AG04449 (cell line): ENCODE measurements at regions of chr2 and their contacts with region 1.

Region 1: DNA sequence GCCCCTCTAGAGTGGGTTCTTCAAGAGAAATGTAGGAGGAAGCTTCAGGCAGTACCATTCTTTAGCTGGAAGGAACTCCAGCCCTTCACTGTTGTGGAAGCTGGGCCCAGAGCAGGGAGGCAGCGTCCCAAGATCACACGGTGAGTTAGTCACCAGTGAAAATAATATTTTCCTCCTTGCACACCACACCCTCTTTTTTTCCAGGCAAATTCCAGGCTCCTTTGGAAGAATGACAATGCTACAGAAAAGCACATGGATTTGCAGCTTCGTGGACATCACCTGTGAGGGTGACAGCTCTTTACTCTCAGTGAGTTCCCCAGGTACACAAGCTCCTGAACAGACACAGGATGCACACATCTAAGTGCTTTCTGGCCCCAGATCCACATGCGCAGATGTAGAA is 157.1 kb downstream of the COL6A3 start:
- DNase-seq: no peak
- H3K4me3 ChIP-seq: no peak overlapping the region
- CTCF ChIP-seq: no peak

Region 2: DNA sequence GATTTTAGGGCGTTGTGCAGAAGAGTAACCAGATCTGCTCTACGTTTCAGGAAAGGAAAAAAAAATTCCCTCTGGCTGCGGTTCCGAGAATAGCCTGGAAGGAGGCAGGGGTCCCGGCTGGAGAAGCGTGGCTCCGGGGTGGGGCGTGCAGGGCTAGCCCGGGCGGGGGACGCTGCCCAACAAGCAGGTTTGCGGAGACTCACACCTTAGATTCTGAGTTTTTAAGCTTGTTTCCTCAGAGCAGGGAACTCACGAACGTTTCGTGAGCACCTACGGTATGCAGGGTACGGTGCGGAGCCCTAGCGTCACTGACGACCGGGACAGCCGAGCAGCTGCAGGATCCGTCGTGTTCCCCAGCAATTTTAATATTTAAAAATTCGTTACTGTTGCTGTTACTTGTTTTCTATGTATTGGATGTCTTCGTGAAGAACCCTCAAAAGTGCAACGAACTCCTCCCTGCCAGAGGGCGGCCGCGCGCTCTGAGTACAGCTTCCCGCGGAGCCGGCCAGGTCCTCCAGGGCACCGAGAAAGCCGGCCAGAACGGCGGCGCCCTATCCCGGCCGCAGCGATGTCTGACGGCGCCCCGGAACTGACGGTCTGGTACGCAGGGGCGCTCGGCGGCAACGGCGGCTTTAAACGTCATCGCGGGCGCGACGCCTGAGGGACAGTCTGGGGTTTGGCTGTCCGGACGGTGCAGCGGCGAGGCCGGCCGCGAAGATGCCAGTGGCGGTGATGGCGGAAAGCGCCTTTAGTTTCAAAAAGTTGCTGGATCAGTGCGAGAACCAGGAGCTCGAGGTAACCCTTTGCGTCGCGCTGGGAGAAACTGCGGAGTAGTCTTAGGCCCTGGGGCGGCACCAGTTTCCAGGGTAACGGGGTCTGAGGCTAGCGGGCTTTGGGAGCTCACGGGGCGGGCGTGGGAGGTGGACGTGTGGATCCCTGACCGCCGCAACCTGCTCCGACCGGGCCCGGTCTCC is 171.4 kb before region 1 on chr2 and contains the start of gene COPS8:
- CTCF ChIA-PET with region 1: no interaction called
- POLR2A ChIA-PET with region 1: no interaction called
- DNase-seq: no peak
- H3K4me3 ChIP-seq: peak within 1 kb of the TSS; percentile 83
- CTCF ChIP-seq: peak; percentile 25

Region 3: DNA sequence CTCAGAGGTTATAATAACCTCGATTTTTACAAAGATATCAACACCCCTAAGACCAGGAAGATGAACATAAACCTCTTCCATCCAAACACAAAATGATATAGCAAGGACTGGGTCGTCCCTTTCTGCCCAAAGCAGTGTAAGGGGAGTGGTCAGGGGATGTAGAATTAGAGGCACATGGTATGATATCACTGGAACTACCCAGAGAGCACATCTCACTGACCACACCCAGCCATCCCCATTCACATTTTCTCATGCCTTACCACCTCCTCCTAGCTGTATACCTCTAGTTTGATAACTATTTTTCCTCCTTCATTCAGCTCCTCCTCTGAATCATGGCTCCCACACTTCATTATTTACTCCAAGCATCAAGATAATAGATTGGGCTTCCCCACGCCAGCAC is 18.6 kb before region 1 on chr2:
- CTCF ChIA-PET with region 1: interaction called, 10 read pairs
- POLR2A ChIA-PET with region 1: no interaction called
- DNase-seq: no peak
- H3K4me3 ChIP-seq: no peak overlapping the region
- CTCF ChIP-seq: no peak

Region 4: DNA sequence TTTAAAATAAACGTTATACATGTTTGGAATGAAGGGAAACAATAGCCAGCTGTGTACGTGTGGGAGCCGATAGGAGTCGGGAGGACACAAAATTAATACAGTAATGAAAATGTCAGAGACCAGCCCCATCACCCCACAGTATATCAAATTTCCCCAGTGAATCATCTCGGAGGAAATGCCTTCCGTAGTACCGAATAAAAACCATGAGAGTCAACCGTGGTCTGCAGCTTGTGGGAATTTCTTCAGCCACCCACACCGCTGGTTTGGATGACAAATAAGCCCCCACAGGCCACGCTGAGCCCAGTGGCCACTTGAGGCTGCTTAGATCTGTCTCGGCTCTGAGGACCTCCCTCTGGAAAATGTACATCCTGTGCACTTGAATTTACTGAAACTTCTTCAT is 23.3 kb after region 1 on chr2:
- CTCF ChIA-PET with region 1: interaction called, 7 read pairs
- POLR2A ChIA-PET with region 1: interaction called, 14 read pairs
- DNase-seq: peak; percentile 90
- H3K4me3 ChIP-seq: no peak overlapping the region
- CTCF ChIP-seq: no peak

Region 5: GRCh38 chr2:237315170-237315828 is 58.4 kb after region 1 on chr2:
- CTCF ChIA-PET with region 1: interaction called, 13 read pairs
- POLR2A ChIA-PET with region 1: interaction called, 3 read pairs
- DNase-seq: peak; percentile 97
- H3K4me3 ChIP-seq: no peak overlapping the region
- CTCF ChIP-seq: peak; percentile 63